ENCODE measurements at regions of chr7 and their contacts with region 1.

Region 1: DNA sequence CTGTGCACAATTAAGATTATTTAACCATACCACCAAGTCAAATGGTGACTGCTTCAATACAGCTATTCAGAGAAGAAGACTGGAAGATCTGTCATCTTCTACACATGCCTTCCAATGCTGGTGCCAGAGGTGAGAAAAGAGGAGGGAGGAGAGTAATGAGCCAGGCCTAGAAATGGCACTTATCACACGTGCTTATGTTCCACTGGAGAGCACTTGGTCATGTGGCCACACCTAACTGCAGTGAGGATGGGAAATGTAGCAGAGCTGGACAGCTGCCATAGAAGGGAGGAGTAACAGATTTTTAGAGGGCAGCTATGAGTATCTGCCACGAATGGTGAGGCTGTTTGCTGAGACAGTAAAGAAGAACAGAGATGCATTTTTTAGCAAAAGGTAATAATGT is 77.1 kb downstream of the MPLKIP start:
- DNase-seq: no peak
- H3K4me3 Mint-ChIP-seq: no peak overlapping the region
- H3K27ac Mint-ChIP-seq: no peak overlapping the region
- H3K4me1 Mint-ChIP-seq: peaks cover 3% of the 10 kb centered on the region
- H3K27me3 Mint-ChIP-seq: no peaks in the 10 kb centered on the region

Region 2: DNA sequence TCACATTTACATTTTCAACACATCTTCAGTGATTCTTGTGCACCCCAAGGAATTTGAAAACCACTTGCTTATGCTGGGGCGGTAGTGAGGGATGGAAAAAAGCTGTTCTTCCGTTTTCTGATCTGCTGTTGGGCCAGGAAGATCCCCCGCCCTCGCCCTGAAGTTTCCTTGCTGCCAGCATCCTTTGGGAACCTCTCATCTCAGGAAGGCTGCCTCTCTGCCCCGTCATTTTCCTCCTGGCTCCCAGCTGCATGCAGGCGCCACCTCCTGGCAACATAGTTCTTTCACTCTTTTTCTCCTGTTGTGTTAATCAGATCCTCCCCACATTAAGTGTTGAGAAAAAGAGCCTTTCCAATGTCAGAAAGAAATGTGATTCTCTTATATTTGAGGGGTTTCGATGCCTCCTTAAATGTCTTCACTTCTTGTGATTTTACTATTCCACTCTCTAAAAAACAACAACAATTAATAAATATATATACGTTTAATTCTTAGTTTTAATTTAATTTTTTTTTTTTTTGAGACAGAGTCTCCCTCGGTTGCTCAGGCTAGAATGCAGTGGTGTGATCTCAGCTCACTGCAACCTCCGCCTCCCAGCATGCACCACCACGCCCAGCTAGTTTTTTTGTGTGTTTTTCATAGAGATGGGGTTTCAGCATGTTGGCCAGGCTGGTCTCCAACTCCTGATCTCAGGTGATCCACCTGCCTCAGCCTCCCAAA is 311.0 kb before region 1 on chr7:
- CTCF ChIA-PET with region 1: no interaction called
- POLR2A ChIA-PET with region 1: no interaction called
- intact Hi-C with region 1: loop called (anchors 5 kb)
- DNase-seq: peak; percentile 69
- H3K4me3 Mint-ChIP-seq: no peak overlapping the region
- H3K27ac Mint-ChIP-seq: no peak overlapping the region
- H3K4me1 Mint-ChIP-seq: peaks cover 9% of the 10 kb centered on the region
- H3K27me3 Mint-ChIP-seq: no peaks in the 10 kb centered on the region

Region 3: GRCh38 chr7:39894904-39895303 is 162.4 kb before region 1 on chr7:
- CTCF ChIA-PET with region 1: interaction called, 223 read pairs
- POLR2A ChIA-PET with region 1: interaction called, 3 read pairs
- intact Hi-C with region 1: loop called (anchors 1 kb)
- DNase-seq: no peak
- H3K4me3 Mint-ChIP-seq: no peak overlapping the region
- H3K27ac Mint-ChIP-seq: no peak overlapping the region
- H3K4me1 Mint-ChIP-seq: no peaks in the 10 kb centered on the region
- H3K27me3 Mint-ChIP-seq: peaks cover 2% of the 10 kb centered on the region

Region 4: GRCh38 chr7:39958038-39958437 is 99.3 kb before region 1 on chr7:
- CTCF ChIA-PET with region 1: interaction called, 12 read pairs
- POLR2A ChIA-PET with region 1: interaction called, 3 read pairs
- intact Hi-C with region 1: no loop called
- DNase-seq: no peak
- H3K4me3 Mint-ChIP-seq: no peak overlapping the region
- H3K27ac Mint-ChIP-seq: no peak overlapping the region
- H3K4me1 Mint-ChIP-seq: peaks cover 69% of the 10 kb centered on the region
- H3K27me3 Mint-ChIP-seq: no peaks in the 10 kb centered on the region

Region 5: DNA sequence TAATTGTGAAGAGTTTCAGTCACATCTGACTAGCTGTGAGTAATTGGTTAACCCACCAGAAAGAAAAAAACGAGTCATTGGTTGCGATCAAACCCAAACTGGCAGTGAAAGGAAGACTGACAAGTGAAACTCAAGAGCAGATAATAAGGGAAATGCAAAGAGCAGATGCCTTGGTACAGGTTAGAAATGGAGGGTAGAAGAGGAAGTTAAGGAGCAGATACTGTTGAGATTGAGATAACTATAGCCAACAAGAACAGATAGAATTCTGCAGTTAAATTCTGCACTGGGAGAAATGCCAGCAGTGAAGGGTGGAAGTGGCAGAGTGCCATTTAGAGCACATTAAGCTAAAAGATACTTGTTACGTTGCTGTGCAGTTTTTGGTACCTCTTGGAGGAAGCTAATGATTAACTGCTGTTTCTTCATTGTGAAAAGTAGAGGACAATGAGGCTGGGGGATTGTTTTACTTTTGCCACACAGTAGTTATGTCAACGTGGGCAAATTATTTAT is 41.4 kb before region 1 on chr7:
- CTCF ChIA-PET with region 1: interaction called, 10 read pairs
- POLR2A ChIA-PET with region 1: no interaction called
- intact Hi-C with region 1: no loop called
- DNase-seq: no peak
- H3K4me3 Mint-ChIP-seq: no peak overlapping the region
- H3K27ac Mint-ChIP-seq: peak overlapping the region; percentile 26
- H3K4me1 Mint-ChIP-seq: peaks cover 24% of the 10 kb centered on the region
- H3K27me3 Mint-ChIP-seq: no peaks in the 10 kb centered on the region

Region 6: DNA sequence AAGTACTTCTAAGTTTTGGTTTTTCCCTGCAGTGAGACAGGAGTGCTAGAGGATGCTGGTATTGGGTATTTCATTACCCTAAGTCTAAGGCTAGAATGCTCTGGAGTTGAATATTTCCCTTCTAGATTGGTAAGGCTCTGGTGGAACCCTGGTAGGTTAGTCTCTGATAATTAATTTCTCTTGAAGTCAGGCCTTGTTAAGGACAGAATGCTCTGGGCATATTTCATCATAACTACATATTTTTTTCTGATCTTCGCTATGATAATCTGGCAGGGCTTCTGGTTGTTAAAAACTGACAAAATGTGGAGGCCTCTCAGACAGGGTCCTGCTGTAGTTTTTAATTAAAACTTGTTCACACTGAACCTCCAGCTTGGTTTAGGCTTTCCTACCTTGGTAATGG is 23.5 kb before region 1 on chr7:
- CTCF ChIA-PET with region 1: interaction called, 16 read pairs
- POLR2A ChIA-PET with region 1: no interaction called
- intact Hi-C with region 1: no loop called
- DNase-seq: no peak
- H3K4me3 Mint-ChIP-seq: no peak overlapping the region
- H3K27ac Mint-ChIP-seq: no peak overlapping the region
- H3K4me1 Mint-ChIP-seq: peaks cover 21% of the 10 kb centered on the region
- H3K27me3 Mint-ChIP-seq: no peaks in the 10 kb centered on the region

Region 7: GRCh38 chr7:40041456-40041855 is 15.8 kb before region 1 on chr7:
- CTCF ChIA-PET with region 1: interaction called, 22 read pairs
- POLR2A ChIA-PET with region 1: no interaction called
- intact Hi-C with region 1: no loop called
- DNase-seq: no peak
- H3K4me3 Mint-ChIP-seq: no peak overlapping the region
- H3K27ac Mint-ChIP-seq: no peak overlapping the region
- H3K4me1 Mint-ChIP-seq: peaks cover 5% of the 10 kb centered on the region
- H3K27me3 Mint-ChIP-seq: no peaks in the 10 kb centered on the region

Measured in activated CD4-positive, alpha-beta memory T cell treated with anti-CD3 and anti-CD28 coated beads for 36 hours (primary cell).